ENCODE measurements at regions of chr15 and their contacts with region 1.

Region 1: GRCh38 chr15:92521624-92522008 is 127.9 kb downstream of the ST8SIA2 start:
- DNase-seq: peak; percentile 67 to 79
- ATAC-seq: peak; percentile 95 to 97
- H3K4me3 ChIP-seq: no peak overlapping the region
- H3K27ac ChIP-seq: no peak overlapping the region
- H3K4me1 ChIP-seq: peaks cover 12 to 20% of the 10 kb centered on the region in 2 donors
- H3K27me3 ChIP-seq: no peaks in the 10 kb centered on the region
- CTCF ChIP-seq: peak; percentile 66 to 84 (median 79)
- POLR2A ChIP-seq: no peak

Region 2: GRCh38 chr15:92451225-92451825 is 70.3 kb before region 1 on chr15:
- in situ Hi-C with region 1: no loop called
- intact Hi-C with region 1: no loop called
- DNase-seq: no peak
- ATAC-seq: no peak
- H3K4me3 ChIP-seq: no peak overlapping the region
- H3K27ac ChIP-seq: no peak overlapping the region
- H3K4me1 ChIP-seq: no peaks in the 10 kb centered on the region
- H3K27me3 ChIP-seq: no peaks in the 10 kb centered on the region
- CTCF ChIP-seq: no peak
- POLR2A ChIP-seq: no peak

Region 3: DNA sequence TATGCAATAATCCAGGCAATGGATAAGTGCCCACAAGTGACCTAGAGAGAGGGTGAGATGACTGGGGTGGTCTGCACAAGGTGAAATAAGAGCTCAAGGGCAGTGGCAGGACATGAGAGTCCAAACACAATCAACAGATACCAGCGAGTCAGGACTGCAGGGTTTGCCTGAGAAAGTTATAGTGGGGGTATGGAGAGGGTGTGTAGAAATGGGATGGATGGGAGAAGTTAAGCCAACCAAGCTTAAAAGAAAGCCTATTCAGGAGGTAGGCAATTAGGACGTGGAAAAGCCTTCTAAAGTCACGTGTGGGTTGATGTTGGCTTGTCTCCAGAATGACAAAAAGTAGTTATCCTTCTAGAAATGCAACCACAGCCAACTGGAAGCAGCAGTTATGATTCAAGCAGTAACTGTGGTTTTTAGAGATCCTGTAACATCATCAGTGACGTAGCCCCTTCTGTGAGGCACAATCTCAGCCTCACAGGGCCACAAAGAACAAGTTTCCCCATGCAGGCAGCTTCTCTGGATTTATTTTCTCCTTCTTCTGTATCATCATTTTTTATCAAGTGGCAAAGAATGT is 77.9 kb after region 1 on chr15:
- in situ Hi-C with region 1: no loop called
- intact Hi-C with region 1: loop called (anchors 5 kb)
- DNase-seq: no peak
- ATAC-seq: no peak
- H3K4me3 ChIP-seq: no peak overlapping the region
- H3K27ac ChIP-seq: no peak overlapping the region
- H3K4me1 ChIP-seq: peaks cover 0 to 6% of the 10 kb centered on the region in 2 donors
- H3K27me3 ChIP-seq: no peaks in the 10 kb centered on the region
- CTCF ChIP-seq: no peak
- POLR2A ChIP-seq: no peak

Region 4: DNA sequence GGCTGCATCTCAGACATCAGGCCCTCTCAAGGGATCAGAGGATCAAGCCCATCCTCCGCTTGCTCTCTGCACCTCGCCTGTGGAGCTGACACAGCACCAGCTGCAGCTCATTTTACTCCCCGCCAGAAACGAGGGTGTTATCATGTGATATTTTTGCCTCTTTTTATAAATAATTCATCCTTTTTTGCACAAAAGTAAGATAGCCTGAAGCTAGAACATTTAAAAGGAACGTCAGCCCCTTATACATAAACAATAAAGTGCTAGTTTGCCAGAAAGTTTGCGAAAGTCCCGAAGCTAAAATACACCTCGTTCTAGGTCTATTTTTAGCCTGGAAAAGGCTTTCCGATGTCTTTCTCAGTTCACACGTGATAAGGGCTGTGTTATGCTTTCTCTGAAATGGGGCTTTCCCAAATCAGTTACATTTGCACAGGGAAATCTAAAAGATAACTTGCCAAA is 143.5 kb after region 1 on chr15:
- in situ Hi-C with region 1: no loop called
- intact Hi-C with region 1: loop called (anchors 5 kb)
- DNase-seq: no peak
- ATAC-seq: peak; percentile 94 to 96
- H3K4me3 ChIP-seq: peak overlapping the region in 3 of 4 donors; percentile 13 to 31 (median 22)
- H3K27ac ChIP-seq: peak overlapping the region in 3 of 4 donors; percentile 68 to 74 (median 70)
- H3K4me1 ChIP-seq: peaks cover 15 to 26% of the 10 kb centered on the region in 2 donors
- H3K27me3 ChIP-seq: no peaks in the 10 kb centered on the region
- CTCF ChIP-seq: no peak
- POLR2A ChIP-seq: no peak

Region 5: DNA sequence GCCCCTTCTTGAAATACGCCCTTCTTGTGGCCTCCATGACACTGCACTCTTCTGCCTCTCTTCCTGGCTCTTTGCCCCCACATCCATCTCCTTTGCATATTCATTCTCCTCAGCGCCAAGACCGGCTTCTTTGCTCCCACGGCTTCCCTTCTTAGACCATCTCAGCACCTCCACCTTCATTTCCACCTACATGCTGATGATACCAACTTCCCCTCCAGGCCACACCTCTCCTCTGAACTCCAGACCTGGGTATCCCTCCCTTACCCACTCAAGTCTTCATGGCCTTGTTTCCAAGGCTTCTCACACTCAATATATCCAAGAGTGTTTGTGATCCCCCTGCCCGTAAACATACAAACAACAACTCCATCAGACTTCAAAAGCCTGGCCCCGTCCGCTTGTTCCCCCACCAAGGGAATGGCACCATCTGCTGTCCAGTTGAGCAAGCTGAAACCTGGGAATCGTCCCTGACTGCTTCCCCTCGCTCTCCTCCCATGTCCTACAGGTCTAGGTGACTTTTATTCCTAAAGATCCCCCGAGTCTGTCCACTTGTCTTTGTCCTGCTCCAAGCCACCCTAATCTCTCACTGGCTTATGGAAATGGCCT is 161.7 kb after region 1 on chr15:
- in situ Hi-C with region 1: loop called in 3 of 4 experiments (anchors 5 to 10 kb)
- intact Hi-C with region 1: loop called (anchors 1 kb)
- DNase-seq: peak in 1 of 2 donors; percentile 46
- ATAC-seq: peak; percentile 61 to 80
- H3K4me3 ChIP-seq: no peak overlapping the region
- H3K27ac ChIP-seq: peak overlapping the region in 1 of 4 donors; percentile 42
- H3K4me1 ChIP-seq: no peaks in the 10 kb centered on the region
- H3K27me3 ChIP-seq: no peaks in the 10 kb centered on the region
- CTCF ChIP-seq: peak; percentile 42 to 78 (median 75)
- POLR2A ChIP-seq: no peak